GM23248 (cell line): ENCODE measurements at regions of chr19 and their contacts with region 1.

Region 1: DNA sequence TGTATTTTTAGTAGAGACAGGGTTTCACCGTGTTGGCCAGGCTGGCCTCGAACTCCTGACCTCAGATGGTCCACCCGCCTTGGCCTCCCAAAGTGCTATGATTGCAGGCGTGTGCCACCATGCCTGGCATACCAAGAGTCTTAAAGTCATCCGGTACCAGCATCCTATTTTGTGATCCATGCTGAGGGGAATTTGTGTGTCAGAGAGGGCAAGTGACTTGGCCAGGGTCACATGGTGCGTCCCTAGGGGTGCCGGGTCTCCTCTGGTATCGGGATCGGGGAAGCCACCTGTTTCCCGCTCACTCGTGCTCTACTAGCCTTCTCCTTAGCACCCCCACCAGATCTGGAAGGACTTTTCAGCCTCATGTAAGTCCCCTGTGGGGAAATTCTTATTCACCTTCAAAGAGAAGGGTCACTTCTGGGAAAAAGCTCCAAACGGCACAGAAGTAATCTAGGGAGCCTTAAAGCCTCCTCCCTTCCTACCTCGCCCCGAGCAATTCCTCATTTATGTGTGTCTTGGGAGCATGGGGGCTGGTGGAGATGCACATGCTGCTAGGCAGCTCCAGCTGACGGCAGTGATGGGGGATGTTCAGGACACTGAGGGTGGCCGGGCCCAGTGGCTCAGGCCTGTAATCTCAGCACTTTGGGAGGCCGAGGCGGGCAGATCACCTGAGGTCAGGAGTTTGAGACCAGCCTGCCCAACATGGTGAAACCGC is 6.1 kb upstream of the ANKLE1 start:
- DNase-seq: no peak
- H3K4me3 ChIP-seq: no peak overlapping the region
- H3K27ac ChIP-seq: no peak overlapping the region
- H3K4me1 ChIP-seq: no peaks in the 10 kb centered on the region
- H3K27me3 ChIP-seq: no peaks in the 10 kb centered on the region

Region 2: GRCh38 chr19:17075035-17075863 is 200.4 kb before region 1 on chr19 and contains the starts of genes HAUS8 and MYO9B:
- in situ Hi-C with region 1: loop called (anchors 10 kb)
- DNase-seq: peak; percentile 99
- H3K4me3 ChIP-seq: peak within 1 kb of the TSS; percentile 91
- H3K27ac ChIP-seq: peak within 1 kb of the TSS; percentile 86
- H3K4me1 ChIP-seq: peaks cover 26% of the 10 kb centered on the region
- H3K27me3 ChIP-seq: no peaks in the 10 kb centered on the region
- total RNA-seq, gene HAUS8: 1.0 and 3.4 TPM in 2 replicates
- total RNA-seq, gene MYO9B: 49.1 and 71.8 TPM in 2 replicates

Region 3: DNA sequence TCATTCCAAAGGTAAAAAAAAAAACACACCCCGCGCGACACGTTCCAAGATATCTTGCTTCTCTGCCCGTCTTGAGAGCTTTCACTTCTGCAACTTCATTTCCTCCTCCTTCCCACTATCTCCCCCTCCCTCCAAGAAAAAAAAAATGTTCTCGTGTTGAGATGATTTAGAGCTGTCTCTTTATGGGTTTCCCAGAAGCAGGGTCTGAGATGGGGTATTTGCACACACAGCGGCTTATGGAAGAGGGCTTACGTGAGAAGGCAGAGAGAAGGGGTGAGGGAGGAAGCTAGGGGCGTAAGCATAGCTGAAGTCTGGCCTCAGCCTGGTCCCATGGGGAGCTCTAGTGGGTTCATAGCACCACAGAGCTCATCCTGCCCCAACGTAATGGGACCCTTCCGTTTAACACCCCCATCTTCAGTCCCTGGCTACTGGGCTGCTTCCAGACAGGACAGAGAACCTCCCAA is 91.7 kb before region 1 on chr19:
- in situ Hi-C with region 1: no loop called
- DNase-seq: no peak
- H3K4me3 ChIP-seq: no peak overlapping the region
- H3K27ac ChIP-seq: no peak overlapping the region
- H3K4me1 ChIP-seq: no peaks in the 10 kb centered on the region
- H3K27me3 ChIP-seq: no peaks in the 10 kb centered on the region

Region 4: DNA sequence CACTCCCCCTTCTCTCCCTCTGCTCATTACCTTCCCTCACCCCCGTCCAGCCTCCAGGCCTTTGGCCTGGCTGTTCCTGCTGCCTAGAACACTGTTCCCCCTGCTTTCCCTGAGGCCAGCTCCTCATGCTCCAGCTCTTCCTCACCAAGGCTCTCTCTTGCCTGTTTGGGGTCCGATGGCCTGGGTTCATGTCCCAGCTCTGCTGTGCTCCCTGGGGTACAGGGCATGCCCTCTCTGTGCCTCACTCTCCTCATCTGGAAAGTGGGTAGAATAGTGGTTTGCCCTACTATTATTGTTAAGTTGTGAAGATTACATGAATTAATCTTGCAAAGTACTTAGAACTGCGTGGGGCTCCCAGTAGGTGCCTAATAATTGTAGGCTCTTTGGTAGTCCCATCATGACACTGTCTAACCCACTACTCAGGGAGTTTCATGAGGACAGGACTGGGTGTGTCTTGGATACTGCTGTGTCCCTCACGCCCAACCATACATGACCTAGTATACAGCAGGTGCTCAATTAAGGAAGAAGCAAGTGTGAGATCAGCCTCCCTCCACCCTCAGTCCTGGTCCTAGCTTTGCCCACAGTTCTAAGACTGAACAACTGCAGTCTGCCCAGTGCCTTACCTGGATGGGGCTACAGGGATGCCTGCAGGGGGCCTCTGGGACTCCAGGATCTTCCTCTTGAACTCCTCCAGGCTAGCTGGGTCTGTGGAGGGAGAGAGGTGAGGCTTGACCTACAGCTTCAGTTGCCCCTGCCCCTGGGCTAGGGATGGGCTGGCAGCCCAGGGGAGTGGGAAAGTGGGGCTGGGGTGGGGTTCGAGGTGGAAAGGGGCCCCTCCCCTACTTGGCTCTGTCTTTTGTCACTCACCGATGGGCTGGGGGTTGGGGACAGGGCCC is 84.5 kb after region 1 on chr19:
- in situ Hi-C with region 1: no loop called
- DNase-seq: no peak
- H3K4me3 ChIP-seq: no peak overlapping the region
- H3K27ac ChIP-seq: no peak overlapping the region
- H3K4me1 ChIP-seq: no peaks in the 10 kb centered on the region
- H3K27me3 ChIP-seq: no peaks in the 10 kb centered on the region; the same call in 1 of the 2 replicates

Region 5: GRCh38 chr19:17448131-17448967 is 172.7 kb after region 1 on chr19 and contains the start of gene TMEM221:
- in situ Hi-C with region 1: no loop called
- DNase-seq: peak; percentile 69
- H3K4me3 ChIP-seq: peak within 1 kb of the TSS; percentile 66
- H3K27ac ChIP-seq: no peak within 1 kb of the TSS
- H3K4me1 ChIP-seq: no peaks in the 10 kb centered on the region
- H3K27me3 ChIP-seq: no peaks in the 10 kb centered on the region
- total RNA-seq, gene TMEM221: 0.22 TPM in 1 of 2 replicates, not detected in the other

Region 6: GRCh38 chr19:17488593-17489391 is 213.2 kb after region 1 on chr19:
- in situ Hi-C with region 1: no loop called
- DNase-seq: peak; percentile 46
- H3K4me3 ChIP-seq: no peak overlapping the region
- H3K27ac ChIP-seq: no peak overlapping the region
- H3K4me1 ChIP-seq: peaks cover 18% of the 10 kb centered on the region
- H3K27me3 ChIP-seq: no peaks in the 10 kb centered on the region